Activated naive CD4-positive, alpha-beta T cell treated with anti-CD3 and anti-CD28 coated beads for 36 hours (primary cell): ENCODE measurements at regions of chr2 and their contacts with region 1.

Region 1: DNA sequence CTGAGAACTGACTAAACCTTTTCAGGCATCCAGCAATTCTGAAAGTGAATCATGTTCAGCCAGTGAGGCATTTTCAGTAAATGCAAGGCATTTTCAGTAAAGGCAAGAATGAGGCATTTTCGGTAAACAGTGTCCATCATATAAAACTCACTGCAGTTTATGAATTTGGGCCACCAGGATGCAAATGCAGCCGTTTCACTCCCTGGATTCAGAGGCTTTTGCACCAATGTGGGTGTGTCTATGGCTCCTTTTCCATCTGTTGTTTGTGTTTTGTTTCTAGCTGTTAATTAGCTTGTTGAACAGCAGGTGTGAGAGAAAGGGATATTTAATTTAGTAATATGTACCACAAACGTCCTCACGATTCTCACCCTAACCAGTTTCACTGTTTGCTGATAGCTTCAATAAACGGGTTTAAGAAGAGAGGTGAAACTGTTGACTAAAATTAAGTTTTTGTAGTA is 116.3 kb upstream of the PGAP1 start:
- DNase-seq: peak; percentile 45
- H3K4me3 Mint-ChIP-seq: no peak overlapping the region
- H3K27ac Mint-ChIP-seq: peak overlapping the region; percentile 85
- H3K4me1 Mint-ChIP-seq: peaks cover 35% of the 10 kb centered on the region
- H3K27me3 Mint-ChIP-seq: no peaks in the 10 kb centered on the region

Region 2: GRCh38 chr2:196767101-196767500 is 275.7 kb before region 1 on chr2:
- CTCF ChIA-PET with region 1: no interaction called
- intact Hi-C with region 1: no loop called
- DNase-seq: no peak
- H3K4me3 Mint-ChIP-seq: no peak overlapping the region
- H3K27ac Mint-ChIP-seq: no peak overlapping the region
- H3K4me1 Mint-ChIP-seq: no peaks in the 10 kb centered on the region
- H3K27me3 Mint-ChIP-seq: no peaks in the 10 kb centered on the region

Region 3: GRCh38 chr2:197054437-197054836 is 11.7 kb after region 1 on chr2:
- CTCF ChIA-PET with region 1: interaction called, 5 read pairs
- intact Hi-C with region 1: loop called (anchors 1 kb)
- DNase-seq: no peak
- H3K4me3 Mint-ChIP-seq: no peak overlapping the region
- H3K27ac Mint-ChIP-seq: peak overlapping the region; percentile 76
- H3K4me1 Mint-ChIP-seq: peaks cover 21% of the 10 kb centered on the region
- H3K27me3 Mint-ChIP-seq: no peaks in the 10 kb centered on the region

Region 4: GRCh38 chr2:197075759-197076337 is 33.1 kb after region 1 on chr2:
- CTCF ChIA-PET with region 1: no interaction called
- intact Hi-C with region 1: loop called (anchors 2 kb)
- DNase-seq: peak; percentile 35
- H3K4me3 Mint-ChIP-seq: no peak overlapping the region
- H3K27ac Mint-ChIP-seq: no peak overlapping the region
- H3K4me1 Mint-ChIP-seq: peaks cover 44% of the 10 kb centered on the region
- H3K27me3 Mint-ChIP-seq: no peaks in the 10 kb centered on the region